B cell (primary cell): ENCODE measurements at regions of chr7 and their contacts with region 1.

Region 1: GRCh38 chr7:135801045-135801693 is 52.6 kb upstream of the FAM180A start:
- DNase-seq: peak; percentile 78
- ATAC-seq: peak; percentile 58
- H3K4me3 ChIP-seq: no peak overlapping the region
- H3K4me3 Mint-ChIP-seq: peak overlapping the region; percentile 52
- H3K27ac ChIP-seq: no peak overlapping the region
- H3K27ac Mint-ChIP-seq: no peak overlapping the region
- H3K4me1 ChIP-seq: peaks cover 5 to 8% of the 10 kb centered on the region in 2 donors
- H3K4me1 Mint-ChIP-seq: peaks cover 11% of the 10 kb centered on the region
- H3K27me3 ChIP-seq: peaks cover 0 to 17% (median 8%) of the 10 kb centered on the region in 4 experiments
- H3K27me3 Mint-ChIP-seq: peaks cover 14% of the 10 kb centered on the region
- CTCF ChIP-seq: peak; percentile 96

Region 2: DNA sequence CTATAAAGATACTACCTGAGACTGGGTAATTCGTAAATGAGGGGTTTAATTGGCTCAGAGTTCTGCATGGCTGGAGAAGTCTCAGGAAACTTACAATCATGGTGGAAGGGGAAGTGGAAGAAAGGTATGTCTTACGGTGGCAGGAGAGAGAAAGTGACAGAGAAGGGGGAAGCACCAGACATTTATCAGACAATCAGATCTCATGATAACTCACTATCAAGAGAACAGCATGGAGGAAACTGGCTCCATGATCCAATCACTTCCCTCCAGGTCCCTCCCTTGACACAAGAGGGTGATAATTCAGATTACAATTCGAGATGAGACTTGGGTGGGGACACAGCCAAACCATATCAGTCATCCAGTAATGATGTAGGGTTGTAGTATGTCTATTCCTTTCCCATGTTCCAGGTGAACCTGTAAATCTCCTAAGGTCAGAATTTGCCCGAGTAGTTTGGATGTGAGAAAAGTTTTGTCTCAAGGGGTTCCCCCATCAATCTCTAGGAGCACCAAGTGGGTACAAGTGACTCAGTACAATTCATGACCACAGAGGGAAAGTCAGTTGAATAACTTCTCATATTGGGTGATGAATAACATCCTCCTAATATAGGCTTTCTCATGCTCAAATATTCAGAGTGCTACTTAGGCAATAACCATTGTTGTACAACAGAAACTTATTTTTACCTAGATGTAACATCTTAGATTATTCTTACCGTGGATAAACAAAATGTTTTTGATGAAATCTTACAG is 215.7 kb after region 1 on chr7:
- CTCF ChIA-PET with region 1: interaction called, 15 read pairs
- POLR2A ChIA-PET with region 1: no interaction called
- intact Hi-C with region 1: no loop called
- DNase-seq: no peak
- ATAC-seq: no peak
- H3K4me3 ChIP-seq: no peak overlapping the region
- H3K4me3 Mint-ChIP-seq: no peak overlapping the region
- H3K27ac ChIP-seq: no peak overlapping the region
- H3K27ac Mint-ChIP-seq: no peak overlapping the region
- H3K4me1 ChIP-seq: no peaks in the 10 kb centered on the region
- H3K4me1 Mint-ChIP-seq: peaks cover 9% of the 10 kb centered on the region
- H3K27me3 ChIP-seq: no peaks in the 10 kb centered on the region
- H3K27me3 Mint-ChIP-seq: peaks cover 4% of the 10 kb centered on the region
- CTCF ChIP-seq: no peak

Region 3: GRCh38 chr7:136405931-136406777 is 605.0 kb after region 1 on chr7:
- CTCF ChIA-PET with region 1: no interaction called
- POLR2A ChIA-PET with region 1: no interaction called
- intact Hi-C with region 1: loop called (anchors 5 kb)
- DNase-seq: peak; percentile 51
- ATAC-seq: peak; percentile 45
- H3K4me3 ChIP-seq: no peak overlapping the region
- H3K4me3 Mint-ChIP-seq: no peak overlapping the region
- H3K27ac ChIP-seq: no peak overlapping the region
- H3K27ac Mint-ChIP-seq: no peak overlapping the region
- H3K4me1 ChIP-seq: peaks cover 0 to 4% of the 10 kb centered on the region in 2 donors
- H3K4me1 Mint-ChIP-seq: peaks cover 3% of the 10 kb centered on the region
- H3K27me3 ChIP-seq: no peaks in the 10 kb centered on the region
- H3K27me3 Mint-ChIP-seq: no peaks in the 10 kb centered on the region
- CTCF ChIP-seq: peak; percentile 91

Region 4: DNA sequence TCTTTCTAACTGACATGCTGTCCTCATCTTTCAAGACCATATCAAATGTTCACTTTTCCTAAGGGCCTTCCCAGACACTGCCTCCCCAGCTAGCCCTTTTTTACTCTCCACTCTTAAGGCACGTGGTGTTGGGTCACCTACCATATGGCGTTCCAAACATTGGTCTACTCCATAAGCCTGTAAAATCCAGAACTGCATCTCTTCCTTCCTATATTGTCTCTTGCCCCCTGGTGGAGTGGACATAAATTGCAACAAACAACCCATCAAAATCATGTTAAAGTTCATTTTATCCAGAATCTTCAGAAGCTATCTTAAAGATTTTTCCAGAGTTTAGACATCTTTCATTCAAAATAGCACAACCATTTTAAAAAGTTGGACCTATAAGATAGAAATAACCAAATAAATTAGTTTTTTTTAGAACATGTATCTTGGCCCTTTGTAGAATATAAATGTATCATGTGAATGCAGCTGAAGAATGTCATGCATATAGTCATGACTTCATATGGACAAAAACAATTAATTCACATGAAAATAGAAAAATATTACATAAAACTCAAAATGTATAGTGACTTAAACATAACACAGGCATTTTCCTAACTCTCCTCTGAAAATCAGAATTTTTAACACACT is 886.6 kb after region 1 on chr7:
- CTCF ChIA-PET with region 1: no interaction called
- POLR2A ChIA-PET with region 1: no interaction called
- intact Hi-C with region 1: loop called (anchors 10 kb)
- DNase-seq: no peak
- ATAC-seq: no peak
- H3K4me3 ChIP-seq: no peak overlapping the region
- H3K4me3 Mint-ChIP-seq: no peak overlapping the region
- H3K27ac ChIP-seq: no peak overlapping the region
- H3K27ac Mint-ChIP-seq: no peak overlapping the region
- H3K4me1 ChIP-seq: no peaks in the 10 kb centered on the region
- H3K4me1 Mint-ChIP-seq: no peaks in the 10 kb centered on the region
- H3K27me3 ChIP-seq: no peaks in the 10 kb centered on the region
- H3K27me3 Mint-ChIP-seq: no peaks in the 10 kb centered on the region
- CTCF ChIP-seq: peak; percentile 57